HepG2 (cell line): ENCODE measurements at regions of chr7 and their contacts with region 1.

Region 1: GRCh38 chr7:77696198-77697028 is at the start of gene RSBN1L:
- DNase-seq: peak; percentile 96
- ATAC-seq: peak; percentile 95
- H3K4me3 ChIP-seq: peak within 1 kb of the TSS; percentile 99 to 100 (median 100)
- H3K27ac ChIP-seq: peak within 1 kb of the TSS; percentile 87
- H3K4me1 ChIP-seq: peaks cover 57% of the 10 kb centered on the region
- H3K27me3 ChIP-seq: no peaks in the 10 kb centered on the region; a peak in 1 of 5 replicates
- CTCF ChIP-seq: peak; percentile 30; the same call in 1 of the 2 replicates
- EP300 ChIP-seq: no peak
- POLR2A ChIP-seq: peak; percentile 83 to 95
- RAD21 ChIP-seq: 0 out of 2 replicates have a peak, but pooled peaks have one; percentile 14
- total RNA-seq, gene RSBN1L: 21.3 and 25.9 TPM in 2 replicates

Region 2: GRCh38 chr7:77667459-77668086 is 28.8 kb before region 1 on chr7:
- CTCF ChIA-PET with region 1: no interaction called
- POLR2A ChIA-PET with region 1: no interaction called
- in situ Hi-C with region 1: no loop called
- intact Hi-C with region 1: no loop called
- DNase-seq: no peak
- ATAC-seq: no peak
- H3K4me3 ChIP-seq: no peak overlapping the region
- H3K27ac ChIP-seq: no peak overlapping the region
- H3K4me1 ChIP-seq: peaks cover 11% of the 10 kb centered on the region
- H3K27me3 ChIP-seq: no peaks in the 10 kb centered on the region
- CTCF ChIP-seq: no peak
- EP300 ChIP-seq: no peak
- POLR2A ChIP-seq: no peak
- RAD21 ChIP-seq: no peak

Region 3: GRCh38 chr7:77734659-77735421 is 38.4 kb after region 1 on chr7:
- CTCF ChIA-PET with region 1: no interaction called
- POLR2A ChIA-PET with region 1: interaction called, 3 read pairs
- in situ Hi-C with region 1: no loop called
- intact Hi-C with region 1: loop called (anchors 2 kb)
- DNase-seq: no peak
- ATAC-seq: no peak
- H3K4me3 ChIP-seq: no peak overlapping the region
- H3K27ac ChIP-seq: peak overlapping the region; percentile 7
- H3K4me1 ChIP-seq: peaks cover 41% of the 10 kb centered on the region
- H3K27me3 ChIP-seq: no peaks in the 10 kb centered on the region
- CTCF ChIP-seq: no peak
- EP300 ChIP-seq: no peak
- POLR2A ChIP-seq: no peak
- RAD21 ChIP-seq: no peak